ENCODE measurements at regions of chr1 and their contacts with region 1.

Region 1: DNA sequence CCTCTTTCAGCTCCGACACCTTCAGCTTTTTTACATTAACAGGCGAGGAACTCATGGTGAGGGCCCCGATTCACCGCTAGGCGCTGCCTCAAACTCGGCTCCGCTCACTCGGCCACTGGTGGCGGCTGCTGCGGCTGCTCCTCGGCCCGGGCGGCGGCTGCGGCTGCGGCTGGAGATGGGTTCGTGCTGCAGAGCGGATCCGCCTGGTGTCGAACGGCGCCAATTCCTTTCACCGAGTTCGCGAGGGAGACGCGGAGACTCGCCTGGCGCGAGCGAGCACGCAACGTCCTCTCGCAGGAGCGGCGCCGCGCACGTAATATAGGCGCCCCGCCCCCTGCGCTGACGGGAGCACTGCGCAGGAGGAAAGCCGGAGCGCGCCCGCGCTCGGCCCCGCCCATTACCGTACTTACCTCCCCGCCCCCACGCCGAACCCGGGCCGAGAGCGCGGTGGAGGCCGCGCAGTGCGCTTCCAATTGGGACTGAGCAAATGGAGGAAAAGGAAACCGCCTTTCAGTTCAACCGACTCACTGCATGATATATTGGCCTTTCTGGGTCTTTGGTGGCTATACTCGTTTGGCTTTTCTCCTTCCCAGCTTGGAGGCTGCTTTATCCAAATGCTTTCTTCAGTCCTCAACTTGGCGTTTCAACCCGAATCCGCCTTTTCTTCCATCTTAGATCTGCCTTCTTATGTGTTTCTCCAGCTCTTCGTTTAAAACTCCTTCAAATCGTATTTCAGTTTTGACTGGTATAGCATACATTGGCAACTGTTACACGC is at the start of gene HNRNPU:
- DNase-seq: peak; percentile 96 to 97
- H3K4me3 ChIP-seq: peak within 1 kb of the TSS; percentile 93 to 94
- H3K27ac ChIP-seq: peak within 1 kb of the TSS; percentile 99 to 100
- H3K4me1 ChIP-seq: peaks cover 6 to 10% of the 10 kb centered on the region in 2 donors
- H3K27me3 ChIP-seq: no peaks in the 10 kb centered on the region
- CTCF ChIP-seq: peak in 2 of 4 experiments; percentile 35 to 54
- POLR2A ChIP-seq: peak; percentile 98 to 100
- total RNA-seq, gene HNRNPU: 154 to 603 (median 269) TPM

Region 2: DNA sequence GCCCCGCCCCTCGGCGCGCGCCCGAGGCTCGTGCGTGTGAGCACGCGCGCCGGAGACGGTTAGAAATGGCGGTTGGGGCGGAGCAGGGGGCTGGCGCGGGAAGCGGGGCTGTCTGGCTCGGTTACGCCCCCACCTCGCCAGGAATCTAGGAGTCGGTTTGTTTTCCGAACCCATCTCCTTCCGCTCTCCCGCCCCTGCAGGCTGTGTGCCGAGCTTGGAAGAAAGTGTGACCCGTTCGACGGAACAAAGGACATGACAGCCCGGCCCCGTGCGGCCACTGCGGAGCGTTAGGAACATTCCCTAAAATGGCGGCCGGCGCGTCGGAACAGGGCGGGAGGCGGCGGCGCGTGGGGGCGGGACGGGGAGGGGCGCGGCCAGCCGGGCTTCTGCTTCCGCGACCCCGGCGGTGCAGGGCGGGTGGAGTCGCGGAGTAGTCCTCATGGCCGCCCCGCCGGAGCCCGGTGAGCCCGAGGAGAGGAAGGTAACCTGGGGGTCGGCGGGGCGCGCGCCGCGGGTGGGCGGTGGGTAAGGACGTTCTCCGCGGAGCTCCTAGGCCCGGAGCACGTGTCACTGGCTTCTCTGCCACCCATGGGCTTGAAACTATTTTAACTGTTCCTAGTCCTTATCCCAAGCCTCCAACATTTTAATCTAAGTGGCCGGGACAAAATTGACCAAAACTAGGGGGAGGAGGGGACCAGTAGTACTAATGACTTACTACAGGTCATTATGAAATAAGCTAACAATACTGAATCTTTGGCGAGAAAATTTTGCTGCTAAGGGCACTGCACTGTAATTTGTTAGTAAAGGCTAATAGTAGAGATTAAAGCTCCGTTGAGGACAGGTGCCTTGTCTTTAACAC is 28.9 kb before region 1 on chr1 and contains the start of gene COX20:
- intact Hi-C with region 1: loop called (anchors 2 kb)
- DNase-seq: peak; percentile 89 to 91
- H3K4me3 ChIP-seq: peak within 1 kb of the TSS; percentile 54 to 69
- H3K27ac ChIP-seq: peak within 1 kb of the TSS; percentile 99 to 100
- H3K4me1 ChIP-seq: no peaks in the 10 kb centered on the region
- H3K27me3 ChIP-seq: no peaks in the 10 kb centered on the region
- CTCF ChIP-seq: peak in 1 of 4 experiments; percentile 33
- POLR2A ChIP-seq: peak; percentile 33 to 69
- total RNA-seq, gene COX20: 12.3 to 194 (median 36.4) TPM

Region 3: GRCh38 chr1:244970661-244971551 is 106.5 kb after region 1 on chr1:
- intact Hi-C with region 1: loop called (anchors 2 kb)
- DNase-seq: peak; percentile 94
- H3K4me3 ChIP-seq: peak overlapping the region; percentile 68 to 93
- H3K27ac ChIP-seq: peak overlapping the region; percentile 99 to 100
- H3K4me1 ChIP-seq: peaks cover 0 to 6% of the 10 kb centered on the region in 2 donors
- H3K27me3 ChIP-seq: no peaks in the 10 kb centered on the region
- CTCF ChIP-seq: peak; percentile 54 to 80 (median 62)
- POLR2A ChIP-seq: peak; percentile 68 to 71

Region 4: GRCh38 chr1:245016700-245017099 is 152.3 kb after region 1 on chr1:
- intact Hi-C with region 1: no loop called
- DNase-seq: no peak
- H3K4me3 ChIP-seq: no peak overlapping the region
- H3K27ac ChIP-seq: no peak overlapping the region
- H3K4me1 ChIP-seq: no peaks in the 10 kb centered on the region
- H3K27me3 ChIP-seq: no peaks in the 10 kb centered on the region
- CTCF ChIP-seq: no peak
- POLR2A ChIP-seq: no peak